Cardiac septum (tissue), 1 donor: ENCODE measurements at regions of chr12 and their contacts with region 1.

Region 1: GRCh38 chr12:21438643-21439042 is 1.2 kb downstream of the PYROXD1 start:
- DNase-seq: no peak

Region 2: DNA sequence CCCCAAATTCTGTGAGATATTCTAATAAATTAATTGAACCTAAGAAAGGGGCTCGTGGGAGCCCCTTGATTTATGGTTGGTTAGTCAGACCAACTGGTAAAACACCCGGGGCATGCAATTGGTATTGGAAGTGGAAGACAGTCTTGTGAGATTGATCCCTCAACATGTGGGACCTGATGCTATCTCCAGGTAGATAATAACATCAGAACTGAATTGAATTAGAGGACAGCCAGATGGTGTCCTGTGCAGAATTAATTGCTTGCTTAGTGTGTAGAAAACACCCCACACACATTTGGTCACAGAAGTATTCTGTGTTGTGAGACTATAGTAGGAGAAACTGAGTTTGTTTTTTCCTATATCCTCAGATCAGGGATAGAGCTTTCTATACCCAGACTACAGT is 20.8 kb after region 1 on chr12:
- intact Hi-C with region 1: no loop called
- DNase-seq: no peak

Region 3: GRCh38 chr12:21501379-21501956 is 62.8 kb after region 1 on chr12 and contains the starts of genes GOLT1B and RECQL:
- intact Hi-C with region 1: loop called (anchors 5 kb)
- DNase-seq: peak; percentile 96
- total RNA-seq, gene GOLT1B: 26.6 TPM
- total RNA-seq, gene RECQL: 22.3 TPM

Region 4: GRCh38 chr12:21539797-21540196 is 101.2 kb after region 1 on chr12:
- intact Hi-C with region 1: no loop called
- DNase-seq: no peak

Region 5: DNA sequence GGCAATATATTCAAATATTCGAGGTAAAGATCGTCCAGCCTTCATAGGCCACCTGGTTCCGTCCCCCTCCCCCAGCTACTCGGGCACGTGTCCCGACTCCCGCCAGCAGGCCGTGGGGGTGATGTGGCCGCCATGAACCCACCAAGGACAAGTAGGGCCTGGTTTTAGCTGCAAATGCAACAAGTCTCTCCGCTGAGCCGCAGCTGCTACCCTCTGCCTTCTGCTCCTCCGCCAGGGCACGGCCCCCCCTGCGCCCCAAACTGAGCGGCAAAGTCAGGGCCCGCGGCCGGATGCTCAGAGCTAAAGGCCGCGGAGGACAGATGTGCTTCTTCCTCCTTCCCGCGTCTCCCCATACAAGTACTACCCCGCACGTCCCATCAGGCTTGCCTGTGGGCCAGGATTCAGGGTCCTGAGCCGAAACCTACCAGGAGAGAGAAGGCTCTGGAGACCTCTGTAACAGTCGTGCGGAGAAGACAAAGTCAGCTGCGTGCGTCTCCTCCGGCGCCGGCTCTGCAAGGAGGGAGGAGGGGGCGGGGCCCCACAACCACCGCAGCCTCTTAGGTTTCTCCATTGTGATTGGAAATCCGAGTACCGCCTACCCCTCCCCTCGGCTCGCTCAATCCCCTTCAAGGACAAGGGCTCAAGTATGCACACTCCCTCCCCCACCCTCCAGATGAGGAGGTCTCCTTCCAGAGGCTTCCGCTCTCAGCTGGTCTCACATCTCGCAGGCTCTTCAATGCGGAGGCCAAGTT is 218.9 kb after region 1 on chr12 and contains the start of gene LDHB:
- intact Hi-C with region 1: loop called (anchors 5 kb)
- DNase-seq: peak; percentile 97
- total RNA-seq, gene LDHB: 1,416 TPM